MCF 10A (cell line): ENCODE measurements at regions of chr3 and their contacts with region 1.

Region 1: GRCh38 chr3:146577662-146578061 is 27.5 kb downstream of the PLSCR5 start:
- DNase-seq: peak; percentile 60
- H3K4me3 Mint-ChIP-seq: no peak overlapping the region
- H3K27ac Mint-ChIP-seq: no peak overlapping the region
- H3K4me1 Mint-ChIP-seq: peaks cover 15% of the 10 kb centered on the region
- H3K27me3 Mint-ChIP-seq: no peaks in the 10 kb centered on the region
- CTCF ChIP-seq: peak; percentile 49

Region 2: DNA sequence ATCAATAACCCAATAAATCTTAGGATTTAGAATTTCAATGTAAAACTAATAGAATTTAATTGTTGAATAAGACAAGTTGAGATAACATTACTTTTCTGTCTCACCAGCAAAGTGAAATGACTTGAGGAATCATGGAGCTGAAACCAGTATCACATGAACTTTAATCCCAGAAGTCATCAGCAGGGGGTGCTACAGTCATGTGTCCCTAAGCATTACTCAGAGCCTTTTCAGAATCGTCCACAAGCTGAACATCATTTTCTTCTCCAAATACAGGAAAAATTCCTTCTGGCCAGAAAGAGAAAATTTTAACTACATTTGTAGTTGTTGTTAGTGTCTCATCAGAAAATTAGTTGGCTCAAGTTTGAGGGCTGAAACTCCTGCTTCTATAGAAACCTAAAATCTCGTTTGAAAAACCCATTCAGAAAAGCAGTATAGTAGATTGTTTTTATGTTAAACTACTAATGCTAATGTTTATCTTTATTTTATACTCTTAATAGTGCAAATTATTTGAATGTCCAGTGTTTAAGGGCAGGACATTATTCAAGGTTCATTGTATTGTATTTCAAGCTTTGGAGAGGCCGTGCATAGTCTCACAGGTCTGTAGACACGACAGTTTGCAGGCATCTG is 800.8 kb before region 1 on chr3:
- CTCF ChIA-PET with region 1: no interaction called
- POLR2A ChIA-PET with region 1: interaction called, 3 read pairs
- intact Hi-C with region 1: loop called (anchors 5 kb)
- DNase-seq: peak; percentile 78
- H3K4me3 Mint-ChIP-seq: no peak overlapping the region
- H3K27ac Mint-ChIP-seq: no peak overlapping the region
- H3K4me1 Mint-ChIP-seq: no peaks in the 10 kb centered on the region
- H3K27me3 Mint-ChIP-seq: peaks cover 68% of the 10 kb centered on the region
- CTCF ChIP-seq: peak; percentile 78

Region 3: GRCh38 chr3:146218880-146219866 is 358.5 kb before region 1 on chr3:
- CTCF ChIA-PET with region 1: interaction called, 13 read pairs
- POLR2A ChIA-PET with region 1: no interaction called
- intact Hi-C with region 1: loop called (anchors 1 kb)
- DNase-seq: peak; percentile 49
- H3K4me3 Mint-ChIP-seq: no peak overlapping the region
- H3K27ac Mint-ChIP-seq: no peak overlapping the region
- H3K4me1 Mint-ChIP-seq: peaks cover 22% of the 10 kb centered on the region
- H3K27me3 Mint-ChIP-seq: no peaks in the 10 kb centered on the region
- CTCF ChIP-seq: peak; percentile 66

Region 4: DNA sequence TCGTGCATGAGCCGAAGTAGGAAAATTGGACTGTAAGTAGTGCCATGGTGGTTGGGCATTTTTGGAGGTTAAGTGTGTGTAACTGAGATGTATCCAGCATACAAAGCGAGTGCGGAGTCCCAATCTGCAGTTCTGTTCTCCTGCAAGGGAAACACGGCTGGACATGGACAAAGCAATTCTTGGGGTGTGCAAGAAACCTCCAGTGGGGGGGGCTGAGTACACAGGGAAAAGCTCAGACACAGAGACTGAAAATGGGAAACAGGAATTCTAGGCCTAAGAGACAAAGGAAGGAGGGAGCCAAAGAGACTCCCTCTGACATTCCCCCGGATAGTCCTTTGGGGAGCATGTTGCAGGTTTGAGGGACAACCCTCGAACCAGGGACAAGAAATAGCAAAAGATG is 243.5 kb before region 1 on chr3:
- CTCF ChIA-PET with region 1: interaction called, 10 read pairs
- POLR2A ChIA-PET with region 1: interaction called, 3 read pairs
- intact Hi-C with region 1: loop called (anchors 1 kb)
- DNase-seq: peak; percentile 45
- H3K4me3 Mint-ChIP-seq: no peak overlapping the region
- H3K27ac Mint-ChIP-seq: no peak overlapping the region
- H3K4me1 Mint-ChIP-seq: no peaks in the 10 kb centered on the region
- H3K27me3 Mint-ChIP-seq: no peaks in the 10 kb centered on the region
- CTCF ChIP-seq: peak; percentile 23

Region 5: DNA sequence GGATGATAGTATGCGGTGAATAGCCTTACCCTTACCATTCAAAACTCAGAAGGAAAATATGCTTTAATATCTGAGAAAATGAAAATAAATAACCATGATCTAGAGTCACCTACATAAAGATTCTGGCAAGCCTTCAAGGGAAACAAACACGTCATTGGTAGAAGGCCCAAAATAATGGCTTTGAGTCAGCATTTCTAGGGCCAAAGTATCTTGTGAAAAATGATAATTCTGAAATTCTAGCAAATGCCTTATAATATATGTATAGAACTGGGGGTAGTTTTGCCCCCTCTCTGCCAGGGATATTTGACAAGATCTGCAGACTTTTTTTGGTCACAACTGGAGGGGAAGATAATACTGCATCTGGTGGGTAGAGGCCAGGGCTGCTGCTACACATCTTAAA is 48.6 kb before region 1 on chr3:
- CTCF ChIA-PET with region 1: no interaction called
- POLR2A ChIA-PET with region 1: no interaction called
- intact Hi-C with region 1: no loop called
- DNase-seq: peak; percentile 51
- H3K4me3 Mint-ChIP-seq: no peak overlapping the region
- H3K27ac Mint-ChIP-seq: no peak overlapping the region
- H3K4me1 Mint-ChIP-seq: peaks cover 5% of the 10 kb centered on the region
- H3K27me3 Mint-ChIP-seq: no peaks in the 10 kb centered on the region
- CTCF ChIP-seq: no peak

Region 6: GRCh38 chr3:146544002-146544928 is 33.4 kb before region 1 on chr3 and contains the start of gene PLSCR1:
- CTCF ChIA-PET with region 1: interaction called, 8 read pairs
- POLR2A ChIA-PET with region 1: interaction called, 13 read pairs
- intact Hi-C with region 1: loop called (anchors 5 kb)
- DNase-seq: peak; percentile 99
- H3K4me3 Mint-ChIP-seq: peak within 1 kb of the TSS; percentile 79
- H3K27ac Mint-ChIP-seq: peak within 1 kb of the TSS; percentile 96
- H3K4me1 Mint-ChIP-seq: peaks cover 28% of the 10 kb centered on the region
- H3K27me3 Mint-ChIP-seq: no peaks in the 10 kb centered on the region
- CTCF ChIP-seq: no peak
- total RNA-seq, gene PLSCR1: 62.8 and 79.2 TPM in 2 replicates

Region 7: GRCh38 chr3:146589899-146590508 is 12.3 kb after region 1 on chr3:
- CTCF ChIA-PET with region 1: interaction called, 22 read pairs
- POLR2A ChIA-PET with region 1: no interaction called
- intact Hi-C with region 1: no loop called
- DNase-seq: peak; percentile 55
- H3K4me3 Mint-ChIP-seq: no peak overlapping the region
- H3K27ac Mint-ChIP-seq: no peak overlapping the region
- H3K4me1 Mint-ChIP-seq: no peaks in the 10 kb centered on the region
- H3K27me3 Mint-ChIP-seq: no peaks in the 10 kb centered on the region
- CTCF ChIP-seq: peak; percentile 52

Region 8: DNA sequence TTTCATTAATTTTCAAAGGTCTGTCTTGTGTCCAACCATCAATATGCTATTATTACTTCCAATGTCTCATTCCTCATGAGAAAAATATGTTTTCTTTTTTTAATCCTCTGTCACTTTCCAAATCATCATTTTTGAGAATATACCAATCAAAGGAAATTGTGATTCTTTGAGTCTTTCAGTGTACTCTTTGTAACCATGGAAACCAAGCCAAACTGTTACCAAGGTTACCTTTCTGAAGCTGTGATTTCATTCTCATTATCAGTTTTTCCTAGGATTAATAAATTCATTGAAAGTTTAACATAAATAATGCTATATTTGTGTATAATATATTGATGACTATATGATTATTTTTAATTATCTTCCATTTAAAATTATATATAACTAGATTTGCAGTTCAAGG is 44.1 kb after region 1 on chr3:
- CTCF ChIA-PET with region 1: no interaction called
- POLR2A ChIA-PET with region 1: no interaction called
- intact Hi-C with region 1: no loop called
- DNase-seq: no peak
- H3K4me3 Mint-ChIP-seq: no peak overlapping the region
- H3K27ac Mint-ChIP-seq: no peak overlapping the region
- H3K4me1 Mint-ChIP-seq: no peaks in the 10 kb centered on the region
- H3K27me3 Mint-ChIP-seq: peaks cover 62% of the 10 kb centered on the region
- CTCF ChIP-seq: no peak

Region 9: DNA sequence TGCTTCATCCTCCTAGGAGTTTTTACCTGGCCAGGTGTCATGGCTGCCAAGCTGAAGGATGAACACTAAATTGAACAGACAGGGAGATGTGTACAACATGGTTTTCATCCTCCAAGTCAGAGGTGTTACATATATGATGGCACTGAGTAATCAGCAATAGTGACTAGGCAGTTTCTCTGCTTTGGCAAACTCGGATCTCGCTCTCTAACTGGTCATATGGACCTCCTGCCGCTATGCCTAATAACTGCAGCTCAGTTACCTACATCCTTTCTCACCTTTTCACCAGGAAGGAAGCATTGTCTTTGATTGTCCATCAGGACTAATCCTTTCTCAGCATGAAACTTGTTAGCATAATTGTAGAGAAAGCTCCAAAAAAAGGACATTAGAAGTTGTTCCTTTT is 203.4 kb after region 1 on chr3:
- CTCF ChIA-PET with region 1: no interaction called
- POLR2A ChIA-PET with region 1: no interaction called
- intact Hi-C with region 1: no loop called
- DNase-seq: no peak
- H3K4me3 Mint-ChIP-seq: no peak overlapping the region
- H3K27ac Mint-ChIP-seq: no peak overlapping the region
- H3K4me1 Mint-ChIP-seq: no peaks in the 10 kb centered on the region
- H3K27me3 Mint-ChIP-seq: peaks cover 59% of the 10 kb centered on the region
- CTCF ChIP-seq: no peak